Activated CD8-positive, alpha-beta T cell treated with anti-CD3 and anti-CD28 coated beads, Interleukin-2, amount 10 ng/mL, durations not matched to agents 7 days and 5 days (primary cell): ENCODE measurements at regions of chr2 and their contacts with region 1.

Region 1: GRCh38 chr2:218357236-218358159 is 841 bp downstream of the CATIP start:
- DNase-seq: no peak
- ATAC-seq: no peak
- H3K4me3 Mint-ChIP-seq: no peak overlapping the region
- H3K27ac Mint-ChIP-seq: peak overlapping the region; percentile 66
- H3K4me1 Mint-ChIP-seq: peaks cover 2% of the 10 kb centered on the region
- H3K27me3 Mint-ChIP-seq: peaks cover 6% of the 10 kb centered on the region

Region 2: DNA sequence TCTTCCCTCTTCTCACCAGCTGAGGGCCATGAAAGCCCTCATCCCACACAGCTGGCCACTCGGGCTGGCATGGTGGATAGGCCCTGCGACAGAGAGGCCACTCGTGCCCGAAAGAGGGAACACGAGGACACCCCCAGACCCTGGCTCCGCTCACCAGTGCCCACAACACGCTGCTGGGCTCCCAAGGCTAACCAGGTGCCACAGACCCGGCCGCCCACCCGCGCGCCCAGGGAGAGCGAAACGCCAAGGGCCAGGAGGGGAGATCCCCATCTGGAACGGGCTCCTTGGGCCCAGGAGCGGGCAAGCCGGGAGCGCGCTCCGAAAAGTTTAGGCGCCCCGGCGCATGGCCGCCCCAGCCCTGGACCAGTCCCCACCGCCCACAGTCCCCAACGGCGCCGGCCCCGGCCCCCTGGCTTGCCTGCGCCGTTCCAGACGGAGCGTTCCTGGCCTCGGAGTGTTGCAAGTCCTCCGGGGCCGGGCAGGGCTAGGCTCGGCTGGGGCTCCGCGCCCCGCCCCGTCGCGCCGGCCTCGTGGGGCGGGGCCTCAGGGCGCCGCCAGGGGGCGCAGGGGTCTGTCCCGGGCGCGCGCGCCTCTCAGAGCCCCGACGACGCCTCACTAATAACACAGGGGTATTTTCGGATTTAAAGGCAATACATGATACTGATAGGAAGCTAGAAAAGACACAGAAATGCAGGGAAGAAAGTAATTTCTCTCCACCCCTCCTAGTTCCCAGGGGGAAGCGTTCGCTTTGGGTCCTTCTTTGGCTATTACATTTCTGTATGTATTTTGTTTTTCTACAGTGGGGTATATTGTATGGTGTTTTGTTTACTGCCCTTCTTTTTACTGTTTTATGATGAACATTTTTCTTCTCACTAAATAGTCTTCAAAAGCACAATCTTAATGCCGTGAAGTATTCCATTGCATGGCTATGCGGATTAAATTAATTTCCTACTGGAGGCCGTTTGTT is 65.2 kb before region 1 on chr2 and contains the start of gene TMBIM1:
- CTCF ChIA-PET with region 1: interaction called, 17 read pairs
- POLR2A ChIA-PET with region 1: no interaction called
- DNase-seq: peak; percentile 81
- ATAC-seq: peak; percentile 90
- H3K4me3 Mint-ChIP-seq: peak within 1 kb of the TSS; percentile 80
- H3K27ac Mint-ChIP-seq: peak within 1 kb of the TSS; percentile 89
- H3K4me1 Mint-ChIP-seq: peaks cover 60% of the 10 kb centered on the region
- H3K27me3 Mint-ChIP-seq: no peaks in the 10 kb centered on the region
- total RNA-seq, gene TMBIM1: 52.9 to 58.9 TPM

Region 3: DNA sequence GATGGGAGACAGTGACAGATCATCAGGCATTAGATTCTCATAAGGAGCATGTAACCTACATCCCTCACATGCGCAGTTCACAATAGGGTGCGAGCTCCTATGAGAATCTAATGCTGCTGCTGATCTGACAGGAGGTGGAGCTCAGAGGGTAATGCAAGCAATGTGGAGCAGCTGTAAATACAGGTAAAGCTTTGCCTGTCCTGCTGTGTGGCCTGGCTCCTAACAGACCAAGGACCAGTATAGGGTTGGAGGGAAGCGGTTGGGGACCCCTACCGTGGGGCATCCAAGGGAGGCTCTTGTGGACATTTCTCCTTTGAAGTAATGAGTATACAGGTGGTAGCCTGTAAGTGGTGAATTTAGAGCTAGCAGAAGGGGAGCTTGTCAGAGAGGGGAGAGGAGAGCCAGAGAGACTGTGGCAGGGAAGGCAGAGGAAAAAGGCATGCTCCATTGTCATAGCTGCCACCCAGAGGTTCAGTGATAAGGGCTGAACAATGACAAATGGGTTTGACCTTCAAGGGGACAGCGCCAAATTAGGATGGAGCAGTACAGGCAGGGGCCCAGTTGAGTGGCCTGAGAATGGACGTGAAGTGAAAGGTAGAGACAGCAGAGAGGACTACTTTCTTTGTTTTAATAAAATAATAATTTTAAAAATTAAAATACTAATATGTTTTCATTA is 49.9 kb before region 1 on chr2:
- CTCF ChIA-PET with region 1: interaction called, 62 read pairs
- POLR2A ChIA-PET with region 1: no interaction called
- DNase-seq: no peak
- ATAC-seq: no peak
- H3K4me3 Mint-ChIP-seq: no peak overlapping the region
- H3K27ac Mint-ChIP-seq: no peak overlapping the region
- H3K4me1 Mint-ChIP-seq: peaks cover 9% of the 10 kb centered on the region
- H3K27me3 Mint-ChIP-seq: no peaks in the 10 kb centered on the region

Region 4: DNA sequence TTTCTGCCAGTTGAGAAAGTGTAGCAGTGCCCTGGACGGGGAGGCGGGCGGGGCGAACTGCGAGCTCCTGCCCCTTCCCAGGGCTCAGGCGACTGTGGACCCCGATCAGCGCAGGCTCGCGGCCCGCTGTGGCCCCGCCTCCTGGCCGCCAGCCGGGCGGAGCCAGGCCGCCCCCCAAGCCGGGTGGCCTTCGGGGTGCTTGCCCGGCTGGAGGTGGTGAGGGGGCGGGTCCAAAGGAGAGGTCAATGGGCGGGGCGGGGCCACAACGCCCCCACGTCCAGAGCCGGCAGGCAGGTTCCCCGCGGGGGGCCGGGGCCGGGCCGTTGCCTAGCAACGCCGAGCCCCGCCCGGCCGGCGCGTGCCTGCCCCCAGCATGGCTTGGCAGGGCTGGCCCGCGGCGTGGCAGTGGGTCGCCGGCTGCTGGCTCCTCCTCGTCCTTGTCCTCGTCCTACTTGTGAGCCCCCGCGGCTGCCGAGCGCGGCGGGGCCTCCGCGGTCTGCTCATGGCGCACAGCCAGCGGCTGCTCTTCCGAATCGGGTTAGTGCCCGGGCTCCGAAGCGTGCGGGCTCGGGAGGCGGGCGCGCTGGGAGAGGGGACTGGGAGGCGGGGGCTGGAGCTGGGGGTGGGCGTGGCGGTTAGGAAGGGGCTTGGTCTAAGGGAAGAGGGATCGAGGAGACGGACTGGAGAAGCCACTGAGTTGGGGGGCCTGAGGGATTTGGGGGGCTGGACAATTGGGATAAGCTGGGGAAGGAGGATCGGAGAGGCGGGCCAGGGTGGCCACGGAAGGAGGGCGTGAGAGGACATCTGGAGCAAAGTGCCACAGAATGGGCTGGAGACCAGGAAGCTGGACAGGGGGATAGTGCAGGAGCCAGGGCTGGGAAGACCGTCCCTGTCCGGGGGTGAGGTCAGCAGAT is 34.3 kb before region 1 on chr2:
- CTCF ChIA-PET with region 1: interaction called, 12 read pairs
- POLR2A ChIA-PET with region 1: no interaction called
- DNase-seq: peak; percentile 38
- ATAC-seq: peak; percentile 82
- H3K4me3 Mint-ChIP-seq: peak overlapping the region; percentile 70
- H3K27ac Mint-ChIP-seq: peak overlapping the region; percentile 3
- H3K4me1 Mint-ChIP-seq: peaks cover 23% of the 10 kb centered on the region
- H3K27me3 Mint-ChIP-seq: peaks cover 14% of the 10 kb centered on the region

Region 5: DNA sequence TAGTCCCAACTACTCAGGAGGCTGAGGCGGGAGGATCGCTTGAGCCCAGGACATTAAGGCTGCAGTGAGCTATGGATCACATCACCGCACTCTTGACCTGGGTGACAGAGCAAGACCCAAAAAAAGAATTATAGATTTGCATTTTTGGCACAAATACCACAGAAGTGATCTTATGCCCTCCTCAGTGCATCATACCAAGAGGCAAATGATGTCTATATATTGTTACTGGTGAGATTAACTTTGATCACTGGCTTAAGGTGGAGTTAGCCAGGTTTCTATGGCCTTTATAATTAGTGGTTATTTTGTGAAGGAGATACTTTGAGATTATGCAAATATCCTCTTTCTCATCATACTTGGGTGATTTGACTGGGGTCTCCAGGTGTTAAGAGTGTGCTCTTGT is 23.0 kb before region 1 on chr2:
- CTCF ChIA-PET with region 1: no interaction called
- POLR2A ChIA-PET with region 1: no interaction called
- DNase-seq: no peak
- ATAC-seq: no peak
- H3K4me3 Mint-ChIP-seq: no peak overlapping the region
- H3K27ac Mint-ChIP-seq: no peak overlapping the region
- H3K4me1 Mint-ChIP-seq: no peaks in the 10 kb centered on the region
- H3K27me3 Mint-ChIP-seq: no peaks in the 10 kb centered on the region